CD8-positive, alpha-beta T cell (primary cell): ENCODE measurements at regions of chr19 and their contacts with region 1.

Region 1: DNA sequence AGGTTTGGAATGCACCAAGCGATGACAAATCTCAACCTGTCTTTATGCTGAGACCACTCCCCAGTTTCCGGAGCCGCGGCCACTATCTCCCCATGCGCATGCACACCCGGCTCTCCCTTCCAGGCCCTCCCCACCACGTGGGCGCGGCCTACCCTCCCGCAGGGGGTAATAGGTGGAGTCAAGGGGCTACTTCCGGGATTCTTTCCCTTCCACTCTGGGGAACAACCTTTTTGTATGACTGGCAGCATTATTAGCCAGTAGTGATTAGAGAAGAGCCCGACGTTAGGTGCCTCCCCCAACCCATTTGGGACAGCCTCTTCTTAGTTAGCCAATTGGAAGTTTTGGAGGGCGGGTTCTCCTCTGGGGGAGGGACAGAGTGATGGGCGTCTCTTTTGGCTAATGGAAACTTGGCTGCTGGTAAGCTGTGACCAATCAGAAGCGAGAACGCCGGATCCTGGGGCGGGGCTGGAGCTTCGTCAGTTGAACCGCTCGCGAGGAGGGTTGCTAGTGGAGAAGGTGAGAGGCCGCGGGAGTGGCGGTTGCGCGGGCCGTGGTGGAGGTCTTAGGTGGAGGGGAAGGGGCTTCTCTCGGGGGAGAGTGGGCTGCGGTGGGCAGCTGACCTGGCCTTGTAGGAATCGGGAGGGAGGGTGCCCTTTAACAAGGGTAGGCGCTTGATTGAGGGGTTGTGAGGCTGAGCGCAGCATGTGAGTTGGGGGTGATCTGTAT is at the start of gene CCDC61:
- DNase-seq: peak; percentile 92 to 99 (median 95)
- ATAC-seq: peak; percentile 95
- H3K4me3 ChIP-seq: peak within 1 kb of the TSS; percentile 73 to 77
- H3K4me3 Mint-ChIP-seq: no peak within 1 kb of the TSS
- H3K27ac ChIP-seq: peak within 1 kb of the TSS; percentile 64 to 74
- H3K27ac Mint-ChIP-seq: no peak within 1 kb of the TSS
- H3K4me1 ChIP-seq: peaks cover 16% of the 10 kb centered on the region
- H3K4me1 Mint-ChIP-seq: peaks cover 25% of the 10 kb centered on the region
- H3K27me3 ChIP-seq: no peaks in the 10 kb centered on the region
- H3K27me3 Mint-ChIP-seq: peaks cover 7% of the 10 kb centered on the region
- CTCF ChIP-seq: no peak
- total RNA-seq, gene CCDC61: 4.9 to 6.2 TPM

Region 2: GRCh38 chr19:45730389-45731288 is 264.5 kb before region 1 on chr19 and contains the start of gene FBXO46:
- CTCF ChIA-PET with region 1: no interaction called
- POLR2A ChIA-PET with region 1: no interaction called
- intact Hi-C with region 1: loop called in 1 of 2 experiments (anchors 1 kb)
- DNase-seq: peak; percentile 82 to 97 (median 92)
- ATAC-seq: peak; percentile 98
- H3K4me3 ChIP-seq: peak within 1 kb of the TSS; percentile 74 to 91
- H3K4me3 Mint-ChIP-seq: peak within 1 kb of the TSS; percentile 97
- H3K27ac ChIP-seq: peak within 1 kb of the TSS; percentile 67 to 78
- H3K27ac Mint-ChIP-seq: peak within 1 kb of the TSS; percentile 92
- H3K4me1 ChIP-seq: peaks cover 19% of the 10 kb centered on the region
- H3K4me1 Mint-ChIP-seq: peaks cover 32% of the 10 kb centered on the region
- H3K27me3 ChIP-seq: no peaks in the 10 kb centered on the region
- H3K27me3 Mint-ChIP-seq: no peaks in the 10 kb centered on the region
- CTCF ChIP-seq: no peak
- total RNA-seq, gene FBXO46: 15.2 to 17.1 TPM

Region 3: DNA sequence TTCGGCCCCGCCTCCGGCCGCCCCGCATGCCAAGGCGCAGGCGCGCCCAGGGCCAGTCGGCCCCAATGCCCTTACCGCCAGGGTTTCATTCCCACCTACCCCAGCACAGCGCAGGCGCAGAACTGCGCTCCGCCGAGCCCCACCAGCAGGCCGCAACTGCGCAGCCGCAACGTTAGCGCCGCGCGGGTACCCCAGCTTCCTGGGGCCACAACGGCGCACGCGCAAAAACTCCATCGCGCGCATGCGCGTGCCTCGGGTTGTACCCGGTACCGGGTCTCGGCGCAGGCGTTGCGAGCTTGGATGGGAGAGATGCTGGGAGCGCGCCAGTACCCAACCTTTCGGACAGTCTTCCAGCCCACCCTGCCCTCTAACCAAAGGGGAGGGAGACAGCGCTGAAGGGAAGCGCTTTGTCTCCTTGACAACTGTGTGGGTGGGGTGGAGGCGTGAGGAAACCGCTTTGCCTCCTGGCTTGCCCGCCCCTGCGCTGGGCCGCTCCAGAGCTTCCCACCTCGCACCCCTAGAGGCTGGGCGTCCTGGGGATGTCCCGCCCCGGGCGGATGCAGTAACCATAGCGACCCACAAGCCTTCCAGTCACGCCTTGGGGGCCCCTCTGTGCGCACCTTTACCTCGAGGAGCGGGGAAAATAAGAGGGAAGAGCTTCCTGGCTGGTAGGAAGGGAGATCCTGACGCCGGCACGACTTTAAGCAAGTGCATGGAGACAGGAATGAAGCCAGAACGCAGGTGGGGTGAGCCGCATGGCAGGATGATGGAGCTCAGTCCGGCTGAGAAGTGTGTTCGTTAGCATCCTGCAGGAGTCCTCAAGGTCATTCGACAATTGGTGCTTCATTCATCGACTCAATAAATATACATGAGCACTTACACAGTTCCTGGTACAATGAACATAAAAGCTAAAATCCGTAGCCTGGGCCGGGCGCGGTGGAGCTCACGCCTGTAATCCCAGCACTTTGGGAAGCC is 92.2 kb before region 1 on chr19:
- CTCF ChIA-PET with region 1: no interaction called
- POLR2A ChIA-PET with region 1: interaction called, 3 read pairs
- intact Hi-C with region 1: loop called in 1 of 2 experiments (anchors 1 kb)
- DNase-seq: peak; percentile 98 to 100 (median 99)
- ATAC-seq: peak; percentile 82
- H3K4me3 ChIP-seq: peak overlapping the region; percentile 76 to 83
- H3K4me3 Mint-ChIP-seq: peak overlapping the region; percentile 92
- H3K27ac ChIP-seq: peak overlapping the region; percentile 64 to 77
- H3K27ac Mint-ChIP-seq: peak overlapping the region; percentile 72
- H3K4me1 ChIP-seq: peaks cover 17% of the 10 kb centered on the region
- H3K4me1 Mint-ChIP-seq: peaks cover 26% of the 10 kb centered on the region
- H3K27me3 ChIP-seq: no peaks in the 10 kb centered on the region
- H3K27me3 Mint-ChIP-seq: no peaks in the 10 kb centered on the region
- CTCF ChIP-seq: no peak

Region 4: GRCh38 chr19:45927565-45928261 is 67.4 kb before region 1 on chr19:
- CTCF ChIA-PET with region 1: no interaction called
- POLR2A ChIA-PET with region 1: no interaction called
- intact Hi-C with region 1: loop called (anchors 1 kb)
- DNase-seq: peak; percentile 72 to 94 (median 88)
- ATAC-seq: peak; percentile 100
- H3K4me3 ChIP-seq: no peak overlapping the region
- H3K4me3 Mint-ChIP-seq: no peak overlapping the region
- H3K27ac ChIP-seq: no peak overlapping the region
- H3K27ac Mint-ChIP-seq: peak overlapping the region; percentile 7
- H3K4me1 ChIP-seq: peaks cover 7% of the 10 kb centered on the region
- H3K4me1 Mint-ChIP-seq: peaks cover 8% of the 10 kb centered on the region
- H3K27me3 ChIP-seq: no peaks in the 10 kb centered on the region
- H3K27me3 Mint-ChIP-seq: peaks cover 4% of the 10 kb centered on the region
- CTCF ChIP-seq: peak; percentile 15

Region 5: GRCh38 chr19:46009530-46010510 is 14.7 kb after region 1 on chr19:
- CTCF ChIA-PET with region 1: interaction called, 19 read pairs
- POLR2A ChIA-PET with region 1: interaction called, 3 read pairs
- intact Hi-C with region 1: loop called in 1 of 2 experiments (anchors 2 kb)
- DNase-seq: peak; percentile 19 to 80 (median 63)
- ATAC-seq: peak; percentile 84
- H3K4me3 ChIP-seq: no peak overlapping the region
- H3K4me3 Mint-ChIP-seq: no peak overlapping the region
- H3K27ac ChIP-seq: no peak overlapping the region
- H3K27ac Mint-ChIP-seq: no peak overlapping the region
- H3K4me1 ChIP-seq: no peaks in the 10 kb centered on the region
- H3K4me1 Mint-ChIP-seq: peaks cover 5% of the 10 kb centered on the region
- H3K27me3 ChIP-seq: no peaks in the 10 kb centered on the region
- H3K27me3 Mint-ChIP-seq: peaks cover 8% of the 10 kb centered on the region
- CTCF ChIP-seq: peak; percentile 76